ENCODE measurements at regions of chr4 and their contacts with region 1.

Region 1: DNA sequence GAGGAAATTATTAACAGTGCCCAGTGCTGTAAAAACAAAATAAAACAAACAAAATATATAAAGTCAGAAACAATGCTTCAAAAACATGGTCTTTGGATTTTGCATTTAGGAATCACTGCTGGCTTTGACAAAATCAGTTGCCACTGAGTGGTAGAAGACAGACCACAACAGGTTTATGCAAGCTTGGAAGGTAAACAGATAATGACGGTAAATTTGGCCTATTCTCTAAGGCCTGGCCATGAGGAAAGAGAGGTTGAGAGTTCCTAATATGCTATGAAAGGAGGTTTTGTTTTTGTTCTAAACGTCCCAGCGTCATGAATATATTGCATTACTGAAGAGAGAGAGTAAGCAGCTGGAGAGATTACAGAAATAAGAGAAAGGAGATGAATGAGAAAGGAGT is 629.4 kb downstream of the STPG2 start:
- DNase-seq: no peak
- ATAC-seq: no peak
- H3K4me3 ChIP-seq: no peak overlapping the region
- H3K4me3 Mint-ChIP-seq: no peak overlapping the region
- H3K27ac ChIP-seq: no peak overlapping the region
- H3K27ac Mint-ChIP-seq: no peak overlapping the region
- H3K4me1 ChIP-seq: no peaks in the 10 kb centered on the region
- H3K4me1 Mint-ChIP-seq: no peaks in the 10 kb centered on the region
- H3K27me3 ChIP-seq: no peaks in the 10 kb centered on the region
- H3K27me3 Mint-ChIP-seq: no peaks in the 10 kb centered on the region

Region 2: DNA sequence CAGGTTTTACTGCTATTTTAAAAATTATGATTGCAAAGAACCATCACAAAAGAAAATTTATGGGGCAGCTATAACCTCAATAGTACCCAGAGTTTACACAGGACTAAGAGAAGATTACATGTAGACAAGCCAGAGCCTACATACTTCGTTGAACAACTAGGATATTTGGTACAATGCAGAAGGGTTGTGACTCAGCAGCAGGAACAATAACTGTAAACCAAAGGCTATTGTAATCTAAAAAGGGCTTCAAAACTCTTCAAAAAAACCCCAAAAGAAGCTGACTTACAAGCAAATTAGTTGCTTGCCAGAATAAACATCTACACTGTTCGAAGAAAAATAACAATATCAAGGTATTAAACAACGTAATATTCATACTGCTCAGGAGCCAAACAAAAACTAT is 11.3 kb after region 1 on chr4:
- CTCF ChIA-PET with region 1: no interaction called
- POLR2A ChIA-PET with region 1: no interaction called
- intact Hi-C with region 1: no loop called
- DNase-seq: no peak
- ATAC-seq: no peak
- H3K4me3 ChIP-seq: no peak overlapping the region
- H3K4me3 Mint-ChIP-seq: no peak overlapping the region
- H3K27ac ChIP-seq: no peak overlapping the region
- H3K27ac Mint-ChIP-seq: no peak overlapping the region
- H3K4me1 ChIP-seq: no peaks in the 10 kb centered on the region
- H3K4me1 Mint-ChIP-seq: no peaks in the 10 kb centered on the region
- H3K27me3 ChIP-seq: no peaks in the 10 kb centered on the region
- H3K27me3 Mint-ChIP-seq: no peaks in the 10 kb centered on the region

Region 3: GRCh38 chr4:97577004-97577403 is 63.1 kb after region 1 on chr4:
- CTCF ChIA-PET with region 1: no interaction called
- POLR2A ChIA-PET with region 1: no interaction called
- intact Hi-C with region 1: loop called in 1 of 2 experiments (anchors 10 kb)
- DNase-seq: no peak
- ATAC-seq: no peak
- H3K4me3 ChIP-seq: no peak overlapping the region
- H3K4me3 Mint-ChIP-seq: no peak overlapping the region
- H3K27ac ChIP-seq: no peak overlapping the region
- H3K27ac Mint-ChIP-seq: no peak overlapping the region
- H3K4me1 ChIP-seq: no peaks in the 10 kb centered on the region
- H3K4me1 Mint-ChIP-seq: no peaks in the 10 kb centered on the region
- H3K27me3 ChIP-seq: no peaks in the 10 kb centered on the region
- H3K27me3 Mint-ChIP-seq: no peaks in the 10 kb centered on the region